Lower leg skin (tissue), 4 donors: ENCODE measurements at regions of chr18 and their contacts with region 1.

Region 1: DNA sequence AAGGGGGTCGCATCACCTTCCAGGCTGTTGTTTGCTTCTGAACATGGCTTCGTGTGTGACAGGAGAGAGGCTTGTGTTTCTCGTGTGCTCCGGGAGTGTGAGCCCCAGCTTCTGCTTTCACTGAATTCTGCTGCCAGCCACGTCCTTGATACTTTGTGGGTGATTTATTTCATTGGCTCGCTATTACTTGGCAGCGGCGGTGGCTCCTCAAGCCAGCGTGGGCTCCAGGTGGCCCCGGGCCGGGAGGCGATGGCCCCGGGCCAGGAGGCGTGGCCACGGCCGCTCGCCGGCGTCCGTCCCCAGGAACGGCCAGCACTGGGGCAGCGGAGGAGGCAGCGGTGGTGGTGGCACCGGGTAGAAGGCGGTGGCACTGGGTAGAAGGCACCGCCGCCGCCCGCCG is 63.1 kb downstream of the NAPG start:
- DNase-seq: no peak
- H3K4me3 ChIP-seq: no peak overlapping the region
- CTCF ChIP-seq: no peak
- POLR2A ChIP-seq: no peak

Region 2: DNA sequence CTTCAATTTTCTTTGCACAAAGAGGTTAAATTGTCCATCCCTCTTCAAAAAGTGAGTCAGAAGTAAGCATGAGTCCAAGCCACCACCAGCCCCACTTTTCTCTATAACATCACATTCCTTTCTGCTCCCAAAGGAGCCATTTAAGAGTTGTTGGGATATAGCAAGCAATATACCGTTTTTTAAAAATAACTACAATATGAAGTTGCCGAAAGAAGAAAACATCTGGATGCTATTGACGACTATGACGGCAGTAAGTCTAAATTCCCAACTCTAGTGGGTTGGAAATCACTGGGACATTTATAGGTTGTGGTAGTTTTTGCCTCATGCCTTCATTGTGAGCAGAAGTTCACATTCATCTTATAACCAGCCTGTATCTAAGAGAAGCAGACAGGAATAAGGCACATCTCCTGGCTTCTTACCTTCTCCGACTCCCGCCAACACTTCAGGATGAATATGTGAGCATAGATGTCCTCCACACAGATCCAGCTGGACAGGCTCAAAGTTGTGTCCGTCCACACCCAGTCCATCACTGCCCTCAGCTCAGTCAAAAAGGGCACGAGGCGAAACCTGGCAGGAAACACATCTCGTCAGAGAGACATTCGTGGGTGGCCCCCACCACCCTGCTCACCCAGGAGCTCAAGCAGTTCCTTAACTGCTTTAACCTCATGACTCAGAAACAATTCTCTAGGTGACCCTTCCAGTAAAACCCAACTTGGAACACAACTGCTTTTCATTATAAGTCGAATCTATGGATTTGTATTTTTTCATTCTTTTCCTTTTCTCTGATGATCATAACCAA is 100.5 kb after region 1 on chr18:
- intact Hi-C with region 1: no loop called
- DNase-seq: no peak
- H3K4me3 ChIP-seq: no peak overlapping the region
- CTCF ChIP-seq: no peak
- POLR2A ChIP-seq: no peak

Region 3: GRCh38 chr18:11591957-11592356 is 1003.0 kb after region 1 on chr18:
- intact Hi-C with region 1: loop called (anchors 5 kb)
- DNase-seq: no peak
- H3K4me3 ChIP-seq: no peak overlapping the region
- CTCF ChIP-seq: no peak
- POLR2A ChIP-seq: no peak